ENCODE measurements at regions of chr6 and their contacts with region 1.

Region 1: GRCh38 chr6:110949679-110950285 is 8.7 kb upstream of the GTF3C6 start:
- DNase-seq: no peak
- H3K4me3 ChIP-seq: no peak overlapping the region
- H3K27me3 ChIP-seq: no peaks in the 10 kb centered on the region
- CTCF ChIP-seq: peak; percentile 47

Region 2: GRCh38 chr6:110682460-110682853 is 267.3 kb before region 1 on chr6:
- CTCF ChIA-PET with region 1: interaction called, 29 read pairs
- POLR2A ChIA-PET with region 1: no interaction called
- DNase-seq: no peak
- H3K4me3 ChIP-seq: no peak overlapping the region
- H3K27me3 ChIP-seq: no peaks in the 10 kb centered on the region
- CTCF ChIP-seq: peak; percentile 69

Measured in BJ (cell line).